HepG2 (cell line): ENCODE measurements at regions of chr16 and their contacts with region 1.

Region 1: GRCh38 chr16:57091975-57092785 is at the start of gene CPNE2:
- DNase-seq: no peak
- ATAC-seq: peak; percentile 63
- H3K4me3 ChIP-seq: peak within 1 kb of the TSS; percentile 72 to 84 (median 83)
- H3K27ac ChIP-seq: no peak within 1 kb of the TSS
- H3K4me1 ChIP-seq: peaks cover 23% of the 10 kb centered on the region
- H3K27me3 ChIP-seq: peaks cover 2 to 24% of the 10 kb centered on the region in 2 experiments; a peak in 4 of 5 replicates
- CTCF ChIP-seq: peak; percentile 20; the same call in 1 of the 2 replicates
- EP300 ChIP-seq: no peak
- POLR2A ChIP-seq: no peak; a peak in 1 of 4 replicates
- RAD21 ChIP-seq: no peak
- total RNA-seq, gene CPNE2: 8.0 and 10.6 TPM in 2 replicates

Region 2: GRCh38 chr16:57167953-57168352 is 75.8 kb after region 1 on chr16:
- CTCF ChIA-PET with region 1: interaction called, 4 read pairs
- POLR2A ChIA-PET with region 1: no interaction called
- in situ Hi-C with region 1: loop called (anchors 5 kb)
- intact Hi-C with region 1: loop called (anchors 2 kb)
- DNase-seq: peak; percentile 53
- ATAC-seq: peak; percentile 68
- H3K4me3 ChIP-seq: no peak overlapping the region
- H3K27ac ChIP-seq: no peak overlapping the region
- H3K4me1 ChIP-seq: peaks cover 9% of the 10 kb centered on the region
- H3K27me3 ChIP-seq: no peaks in the 10 kb centered on the region
- CTCF ChIP-seq: peak; percentile 77
- EP300 ChIP-seq: no peak
- POLR2A ChIP-seq: no peak
- RAD21 ChIP-seq: peak; percentile 49; the same call in 1 of the 2 replicates

Region 3: GRCh38 chr16:57413301-57413730 is 321.1 kb after region 1 on chr16:
- CTCF ChIA-PET with region 1: no interaction called
- POLR2A ChIA-PET with region 1: no interaction called
- in situ Hi-C with region 1: loop called (anchors 5 kb)
- intact Hi-C with region 1: loop called (anchors 10 kb)
- DNase-seq: no peak
- ATAC-seq: no peak
- H3K4me3 ChIP-seq: no peak overlapping the region
- H3K27ac ChIP-seq: no peak overlapping the region
- H3K4me1 ChIP-seq: peaks cover 46% of the 10 kb centered on the region
- H3K27me3 ChIP-seq: peaks cover 10 to 55% of the 10 kb centered on the region in 2 experiments; a peak in 4 of 5 replicates
- CTCF ChIP-seq: no peak
- EP300 ChIP-seq: no peak
- POLR2A ChIP-seq: no peak
- RAD21 ChIP-seq: no peak